ENCODE measurements at regions of chr3 and their contacts with region 1.

Region 1: DNA sequence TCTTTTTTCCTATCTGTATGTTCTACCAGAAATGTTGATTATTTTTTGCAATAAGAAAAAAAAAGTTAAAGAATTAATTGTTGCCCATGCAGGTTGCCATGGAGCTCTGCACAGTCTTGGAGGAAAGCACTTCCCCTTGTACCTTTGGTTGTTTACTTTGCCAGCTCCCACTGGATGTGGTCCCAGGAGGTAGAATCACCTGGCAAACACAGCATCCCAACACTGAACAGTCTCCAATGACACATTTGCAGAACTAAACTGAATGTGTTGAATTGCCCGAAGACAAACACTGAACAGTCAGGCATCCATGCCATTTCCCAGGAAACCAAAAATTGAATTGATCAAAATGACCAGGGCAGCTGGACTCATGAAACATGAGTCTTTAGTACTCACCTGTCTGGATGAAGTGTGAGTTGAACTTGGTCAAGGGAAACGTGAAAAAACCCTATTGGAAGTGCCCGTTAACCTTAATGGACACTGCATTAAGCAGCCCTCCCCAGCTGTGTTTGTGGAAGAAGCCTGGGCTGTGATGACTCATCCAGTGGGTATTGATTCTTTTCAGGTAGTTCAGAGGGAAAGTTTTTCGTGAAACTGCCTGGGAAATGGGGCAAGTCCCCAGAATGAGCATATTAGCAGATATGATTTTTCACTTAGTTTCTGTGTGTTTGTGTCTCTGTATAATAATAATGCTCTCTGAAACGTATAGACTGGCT is 284.7 kb upstream of the STT3B start:
- DNase-seq: no peak
- CTCF ChIP-seq: no peak

Region 2: DNA sequence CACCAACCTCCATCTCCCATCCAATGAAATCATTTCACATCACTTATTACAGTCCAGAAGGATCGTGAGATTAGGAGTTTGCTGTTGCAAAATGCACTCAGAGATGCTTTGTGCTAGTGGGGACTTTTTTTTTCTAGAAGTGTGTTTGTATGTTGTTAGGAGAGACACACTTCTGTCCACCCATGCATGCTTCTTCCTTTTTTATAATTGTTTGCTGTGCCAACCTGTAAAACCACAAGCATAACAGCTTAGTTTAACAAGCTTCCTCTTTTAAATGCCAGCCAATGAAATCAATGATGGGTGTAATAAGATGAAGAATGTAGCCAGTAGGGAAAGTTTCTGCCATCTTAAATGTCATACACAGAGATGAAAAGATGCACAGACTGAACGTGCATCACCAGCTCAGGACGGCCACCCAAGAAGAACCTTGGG is 20.9 kb before region 1 on chr3:
- CTCF ChIA-PET with region 1: interaction called, 40 read pairs
- POLR2A ChIA-PET with region 1: interaction called, 3 read pairs
- DNase-seq: no peak
- CTCF ChIP-seq: no peak

Region 3: GRCh38 chr3:31232055-31233025 is 15.7 kb before region 1 on chr3:
- CTCF ChIA-PET with region 1: interaction called, 40 read pairs
- POLR2A ChIA-PET with region 1: interaction called, 3 read pairs
- DNase-seq: peak; percentile 42
- CTCF ChIP-seq: no peak

Region 4: DNA sequence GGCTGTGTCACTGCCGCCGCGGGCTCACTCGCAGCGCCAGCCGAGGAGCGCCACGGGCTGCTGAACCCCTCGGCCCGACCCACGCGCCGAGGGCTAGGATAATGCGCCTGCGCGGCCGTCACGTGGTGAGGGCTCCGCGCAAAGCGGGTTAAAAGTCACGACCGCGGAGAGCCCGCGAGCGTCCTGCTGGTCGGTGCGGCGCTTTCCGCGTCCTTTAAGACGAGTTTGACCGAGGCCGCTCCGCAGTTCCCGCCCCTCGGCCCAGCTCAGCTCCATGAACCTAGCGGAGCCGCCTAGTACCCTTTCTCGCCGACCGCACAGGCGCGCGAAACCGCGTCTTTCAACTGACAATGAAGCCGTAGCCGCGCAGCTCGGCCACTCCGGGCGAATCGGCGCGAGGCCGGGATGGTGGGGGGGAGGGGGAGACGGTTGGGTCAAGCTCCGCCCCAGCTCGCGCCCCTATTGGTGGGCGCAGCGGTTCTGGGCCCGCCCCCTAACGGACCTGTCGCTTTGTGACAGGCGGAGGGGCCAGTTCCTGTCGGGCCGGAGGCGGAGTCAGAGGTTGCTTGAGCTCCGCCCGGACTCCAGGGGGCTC is 284.1 kb after region 1 on chr3:
- CTCF ChIA-PET with region 1: interaction called, 14 read pairs
- POLR2A ChIA-PET with region 1: interaction called, 5 read pairs
- DNase-seq: peak; percentile 98
- CTCF ChIP-seq: peak; percentile 0

Measured in GM10248 (cell line).